Left cardiac atrium (tissue), 4 donors: ENCODE measurements at regions of chr17 and their contacts with region 1.

Region 1: GRCh38 chr17:47315451-47316266 is 8.1 kb upstream of the EFCAB13 start:
- DNase-seq: no peak
- ATAC-seq: peak; percentile 67 to 81

Region 2: GRCh38 chr17:47229535-47230443 is 85.9 kb before region 1 on chr17:
- intact Hi-C with region 1: loop called in 1 of 2 experiments (anchors 1 kb)
- DNase-seq: peak; percentile 90
- ATAC-seq: peak; percentile 63 to 79

Region 3: GRCh38 chr17:47239619-47240374 is 75.9 kb before region 1 on chr17:
- intact Hi-C with region 1: loop called in 1 of 2 experiments (anchors 5 kb)
- DNase-seq: peak; percentile 92
- ATAC-seq: peak; percentile 85 to 90

Region 4: DNA sequence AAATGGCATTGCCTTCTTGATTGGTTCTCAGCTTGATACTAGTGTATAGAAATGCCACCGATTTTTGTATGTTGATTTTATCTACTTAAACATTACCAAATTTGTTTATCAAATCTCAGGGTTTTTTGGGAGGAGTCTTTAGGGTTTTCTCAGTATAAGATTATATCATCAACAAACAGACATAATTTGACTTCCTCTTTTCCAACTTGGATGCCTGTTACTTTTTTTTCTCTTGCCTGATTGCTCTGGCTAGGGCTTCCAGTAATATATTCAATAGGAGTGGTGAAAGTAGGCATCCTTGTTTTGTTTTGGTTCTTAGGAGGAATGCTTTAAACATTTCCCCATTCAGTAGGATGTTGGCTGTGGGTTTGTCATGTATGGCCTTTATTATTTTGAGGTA is 37.2 kb after region 1 on chr17:
- intact Hi-C with region 1: no loop called
- DNase-seq: no peak
- ATAC-seq: no peak

Region 5: GRCh38 chr17:47423406-47424295 is 108.0 kb after region 1 on chr17:
- intact Hi-C with region 1: no loop called
- DNase-seq: peak; percentile 23
- ATAC-seq: peak; percentile 71 to 92